ENCODE measurements at regions of chr13 and their contacts with region 1.

Region 1: DNA sequence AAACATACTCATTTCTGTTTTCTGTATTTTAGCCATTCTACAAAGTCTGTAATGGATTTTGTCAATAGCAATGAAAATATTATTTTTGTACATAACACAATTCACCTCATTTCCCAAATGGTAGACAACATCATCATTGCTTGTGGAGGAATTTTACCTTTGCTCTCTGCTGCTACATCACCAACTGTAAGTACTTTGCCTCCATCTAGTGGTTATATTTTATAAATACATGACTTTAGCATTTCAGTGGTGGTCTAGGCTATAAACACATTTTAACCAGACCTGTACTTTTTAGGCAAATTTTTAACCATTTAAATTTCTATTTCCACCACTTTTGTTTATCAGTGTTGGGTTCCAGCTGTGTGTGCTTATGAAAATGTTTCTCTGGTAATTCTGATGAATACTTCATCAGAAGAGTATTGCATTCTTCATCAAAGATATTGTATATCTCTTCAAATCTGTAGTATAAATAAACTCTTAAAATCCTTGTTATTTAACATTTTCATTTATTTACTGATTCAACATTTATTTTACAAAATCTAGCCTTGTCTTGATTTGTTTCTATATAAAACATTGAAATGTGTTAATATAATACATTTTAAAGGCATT is 222.4 kb downstream of the NBEA start:
- DNase-seq: no peak

Region 2: GRCh38 chr13:33918199-33918932 is 1246.1 kb before region 1 on chr13:
- intact Hi-C with region 1: loop called in 1 of 2 experiments (anchors 10 kb)
- DNase-seq: no peak

Region 3: GRCh38 chr13:35198613-35199200 is 34.3 kb after region 1 on chr13:
- intact Hi-C with region 1: no loop called
- DNase-seq: no peak